A549 (cell line): ENCODE measurements at regions of chr2 and their contacts with region 1.

Region 1: DNA sequence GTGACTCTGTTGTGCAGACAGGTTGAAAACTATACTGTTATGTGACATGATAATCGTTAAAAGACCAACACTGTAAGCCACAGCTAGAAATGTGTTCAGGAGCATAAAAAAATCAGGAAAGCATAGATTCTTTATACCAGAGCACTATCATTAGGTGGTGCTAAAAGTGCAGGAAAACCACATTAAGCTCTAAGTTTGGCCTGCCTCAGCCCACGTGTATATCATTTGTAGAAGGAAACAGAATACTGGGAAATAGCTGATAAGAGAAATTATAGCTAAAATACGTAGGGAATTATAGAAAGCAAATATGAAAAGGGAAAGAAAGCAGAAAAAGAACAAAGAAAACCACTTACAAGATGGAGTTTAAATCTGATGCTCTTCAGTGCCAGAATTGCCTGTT is 26.5 kb upstream of the C2orf74 start:
- DNase-seq: peak in 1 of 2 experiments; percentile 61
- ATAC-seq: peak; percentile 85 to 88
- H3K4me3 ChIP-seq: no peak overlapping the region
- H3K27ac ChIP-seq: no peak overlapping the region
- H3K4me1 ChIP-seq: no peaks in the 10 kb centered on the region
- CTCF ChIP-seq: peak; percentile 69
- EP300 ChIP-seq: no peak
- POLR2A ChIP-seq: no peak
- RAD21 ChIP-seq: peak; percentile 77 to 79

Region 2: DNA sequence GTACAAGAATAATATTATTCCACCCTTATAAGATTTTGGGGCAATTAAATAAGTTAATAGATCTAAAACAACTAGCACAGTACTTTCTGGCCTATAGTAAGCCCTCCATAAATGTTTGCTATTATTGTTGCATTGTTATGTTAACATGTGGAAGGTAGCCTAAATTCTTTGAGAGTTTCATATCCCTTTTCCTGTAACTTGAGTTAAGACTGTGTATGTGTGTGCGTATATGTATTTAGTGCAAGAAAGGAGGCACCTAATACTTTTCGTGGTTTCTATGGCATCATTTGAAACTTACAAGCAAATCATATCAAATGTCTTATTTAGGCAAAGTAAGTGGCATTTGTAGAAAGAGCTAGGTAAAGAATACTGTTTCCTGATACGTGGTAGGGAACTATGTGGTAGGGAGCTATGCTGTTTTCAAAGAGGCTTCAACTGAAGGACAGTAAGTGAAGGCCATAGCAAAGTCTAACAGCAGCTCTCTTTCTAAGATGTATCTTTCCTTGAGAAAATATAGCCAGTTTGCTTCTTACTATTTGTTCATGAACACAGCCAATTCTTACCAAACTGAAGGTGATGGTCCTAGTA is 10.3 kb before region 1 on chr2:
- CTCF ChIA-PET with region 1: interaction called, 10 read pairs
- POLR2A ChIA-PET with region 1: no interaction called
- DNase-seq: no peak
- ATAC-seq: no peak
- H3K4me3 ChIP-seq: no peak overlapping the region
- H3K27ac ChIP-seq: no peak overlapping the region
- H3K4me1 ChIP-seq: no peaks in the 10 kb centered on the region
- CTCF ChIP-seq: no peak
- EP300 ChIP-seq: no peak
- POLR2A ChIP-seq: no peak
- RAD21 ChIP-seq: no peak

Region 3: DNA sequence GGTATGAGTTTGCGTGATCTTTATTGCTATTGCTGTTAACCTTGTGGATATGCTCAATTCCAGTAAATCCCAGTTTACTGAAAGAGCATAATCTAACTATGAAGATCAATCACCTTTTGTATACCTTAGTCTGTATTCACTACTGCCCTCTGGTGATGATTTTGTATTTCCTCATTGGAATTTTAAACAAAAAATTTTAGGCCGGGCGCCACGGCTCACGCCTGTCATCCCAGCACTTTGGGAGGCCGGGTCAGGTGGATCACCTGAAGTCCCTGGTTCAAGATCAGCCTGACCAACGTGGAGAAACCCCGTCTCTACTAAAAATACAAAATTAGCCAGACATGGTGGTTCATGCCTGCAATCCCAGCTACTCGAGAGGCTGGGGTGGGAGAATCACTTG is 775.1 kb after region 1 on chr2:
- CTCF ChIA-PET with region 1: interaction called, 16 read pairs
- POLR2A ChIA-PET with region 1: no interaction called
- DNase-seq: no peak
- ATAC-seq: peak in 1 of 2 experiments; percentile 24; a peak in 2 of 6 replicates
- H3K4me3 ChIP-seq: no peak overlapping the region
- H3K27ac ChIP-seq: no peak overlapping the region
- H3K4me1 ChIP-seq: peaks cover 9% of the 10 kb centered on the region; the same call in 2 of the 3 replicates
- CTCF ChIP-seq: peak; percentile 61
- EP300 ChIP-seq: no peak
- POLR2A ChIP-seq: no peak
- RAD21 ChIP-seq: peak; percentile 35 to 36; a peak in 3 of 5 replicates